Activated CD8-positive, alpha-beta T cell treated with anti-CD3 and anti-CD28 coated beads for 36 hours (primary cell): ENCODE measurements at regions of chr15 and their contacts with region 1.

Region 1: DNA sequence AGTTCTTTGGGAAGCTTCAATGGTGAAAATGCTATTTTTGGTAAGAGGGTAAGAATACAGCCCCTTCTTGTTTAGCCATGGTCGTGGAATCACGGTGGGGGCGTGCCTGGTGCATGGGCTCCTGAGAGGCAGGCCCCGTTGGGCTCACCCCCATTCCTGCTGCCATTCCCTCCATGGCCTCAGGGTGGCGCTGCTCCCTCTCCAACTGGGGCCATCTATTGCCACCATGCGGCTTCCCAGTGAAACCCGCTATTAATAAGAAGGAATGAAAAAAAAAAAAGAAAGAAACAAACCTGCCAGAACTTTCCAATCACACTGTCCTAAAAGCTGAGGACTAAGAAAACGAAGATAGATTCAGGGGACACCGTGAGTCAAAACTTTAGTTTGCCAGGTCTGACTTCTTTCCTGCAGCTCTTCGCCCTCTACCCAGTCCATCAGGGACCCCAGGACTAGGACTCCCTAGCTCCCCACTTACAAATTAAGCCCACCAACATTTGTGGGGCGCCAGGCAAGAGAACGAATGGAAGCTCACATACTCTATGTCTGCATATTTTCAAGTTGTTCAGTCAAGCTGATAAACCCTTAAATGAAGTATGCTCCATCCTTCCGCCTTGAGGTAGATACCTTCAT is 30.6 kb upstream of the ABHD2 start:
- DNase-seq: peak; percentile 85
- ATAC-seq: peak; percentile 96
- H3K4me3 Mint-ChIP-seq: no peak overlapping the region
- H3K27ac Mint-ChIP-seq: no peak overlapping the region
- H3K4me1 Mint-ChIP-seq: peaks cover 7% of the 10 kb centered on the region
- H3K27me3 Mint-ChIP-seq: peaks cover 1% of the 10 kb centered on the region
- CTCF ChIP-seq: peak; percentile 98

Region 2: GRCh38 chr15:88791637-88792036 is 266.0 kb before region 1 on chr15:
- CTCF ChIA-PET with region 1: no interaction called
- POLR2A ChIA-PET with region 1: no interaction called
- intact Hi-C with region 1: no loop called
- DNase-seq: no peak
- ATAC-seq: no peak
- H3K4me3 Mint-ChIP-seq: no peak overlapping the region
- H3K27ac Mint-ChIP-seq: no peak overlapping the region
- H3K4me1 Mint-ChIP-seq: no peaks in the 10 kb centered on the region
- H3K27me3 Mint-ChIP-seq: peaks cover 30% of the 10 kb centered on the region
- CTCF ChIP-seq: no peak

Region 3: GRCh38 chr15:89068325-89068784 is 10.7 kb after region 1 on chr15:
- CTCF ChIA-PET with region 1: interaction called, 10 read pairs
- POLR2A ChIA-PET with region 1: interaction called, 3 read pairs
- intact Hi-C with region 1: no loop called
- DNase-seq: peak; percentile 81
- ATAC-seq: peak; percentile 87
- H3K4me3 Mint-ChIP-seq: no peak overlapping the region
- H3K27ac Mint-ChIP-seq: peak overlapping the region; percentile 61
- H3K4me1 Mint-ChIP-seq: peaks cover 12% of the 10 kb centered on the region
- H3K27me3 Mint-ChIP-seq: no peaks in the 10 kb centered on the region
- CTCF ChIP-seq: no peak

Region 4: DNA sequence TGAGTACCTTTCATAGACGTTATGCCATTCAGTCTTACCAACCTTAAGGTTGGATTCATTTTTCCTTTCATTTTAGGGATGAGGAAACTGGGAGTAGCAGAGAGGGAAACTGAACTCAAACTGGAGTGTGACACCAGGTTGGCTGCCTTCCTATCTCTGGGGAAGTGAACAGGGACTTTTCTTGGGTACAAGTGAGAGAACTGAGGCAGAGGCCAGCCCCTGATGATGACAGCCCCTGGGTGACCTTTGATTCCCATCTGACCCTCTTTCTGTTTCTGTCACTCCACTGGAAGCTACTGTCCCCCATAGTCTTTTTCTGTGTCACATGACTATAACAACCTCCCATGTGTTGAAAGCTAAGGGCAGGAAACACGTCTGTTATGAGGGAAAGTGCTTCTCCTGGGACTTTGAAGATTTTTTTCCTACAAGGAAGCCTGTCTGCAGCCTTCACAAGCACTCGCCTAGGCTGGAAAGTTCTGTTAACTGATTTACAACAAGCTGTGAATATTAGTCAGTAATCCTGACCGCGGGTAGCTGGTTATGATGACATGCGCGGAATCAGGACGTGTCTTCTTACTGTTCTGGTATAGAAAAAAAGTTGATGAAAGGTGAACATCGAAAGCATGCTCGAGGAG is 62.0 kb after region 1 on chr15:
- CTCF ChIA-PET with region 1: interaction called, 34 read pairs
- POLR2A ChIA-PET with region 1: no interaction called
- intact Hi-C with region 1: no loop called
- DNase-seq: no peak
- ATAC-seq: no peak
- H3K4me3 Mint-ChIP-seq: no peak overlapping the region
- H3K27ac Mint-ChIP-seq: no peak overlapping the region
- H3K4me1 Mint-ChIP-seq: peaks cover 2% of the 10 kb centered on the region
- H3K27me3 Mint-ChIP-seq: no peaks in the 10 kb centered on the region
- CTCF ChIP-seq: no peak

Region 5: GRCh38 chr15:89150762-89151664 is 93.4 kb after region 1 on chr15:
- CTCF ChIA-PET with region 1: interaction called, 12 read pairs
- POLR2A ChIA-PET with region 1: interaction called, 4 read pairs
- intact Hi-C with region 1: no loop called
- DNase-seq: no peak
- ATAC-seq: no peak
- H3K4me3 Mint-ChIP-seq: no peak overlapping the region
- H3K27ac Mint-ChIP-seq: no peak overlapping the region
- H3K4me1 Mint-ChIP-seq: peaks cover 3% of the 10 kb centered on the region
- H3K27me3 Mint-ChIP-seq: no peaks in the 10 kb centered on the region
- CTCF ChIP-seq: no peak

Region 6: DNA sequence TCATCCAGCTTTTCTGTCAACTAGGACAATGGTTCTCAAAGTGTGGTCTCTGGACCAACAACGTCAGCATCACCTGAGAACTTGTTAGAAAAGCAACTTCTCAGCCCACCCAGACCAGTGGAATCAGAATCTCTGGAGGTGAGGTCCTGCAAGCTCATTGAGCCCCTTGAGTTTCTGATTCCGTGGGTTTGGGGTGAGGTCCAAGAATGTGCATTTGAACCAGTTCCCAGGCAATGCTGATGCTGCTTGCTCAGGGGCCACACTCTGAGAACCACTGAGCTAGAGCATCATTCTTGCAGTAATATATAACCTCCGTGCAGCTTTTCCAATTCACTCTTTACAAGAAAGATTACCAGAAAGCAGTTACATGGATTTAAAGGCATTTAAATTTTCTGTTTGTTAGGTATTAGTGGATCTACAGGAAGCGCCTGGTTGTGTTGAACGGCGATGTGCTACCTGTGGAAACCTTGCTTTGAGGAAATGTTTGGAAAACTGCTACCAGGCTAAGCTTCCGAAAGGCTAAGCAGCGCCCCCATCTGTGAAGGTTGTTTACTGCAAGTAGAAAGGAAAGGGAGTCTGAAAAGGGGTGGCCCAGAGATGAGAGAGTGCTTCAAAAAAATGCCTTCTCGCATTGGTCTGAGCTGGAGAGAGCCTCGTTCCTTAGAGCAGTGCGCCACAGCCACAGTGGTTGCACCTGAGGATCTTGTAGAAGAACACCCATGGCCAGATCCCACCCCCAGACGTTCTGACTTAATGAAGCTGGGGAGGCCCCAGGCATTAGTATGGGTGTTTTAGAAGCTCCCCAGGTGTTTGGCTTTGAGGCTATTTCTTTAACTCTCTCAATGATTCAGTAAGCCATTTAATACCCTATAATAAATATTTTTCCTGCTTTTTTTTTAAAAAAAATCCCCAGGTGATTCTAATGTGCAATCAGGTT is 113.8 kb after region 1 on chr15:
- CTCF ChIA-PET with region 1: interaction called, 262 read pairs
- POLR2A ChIA-PET with region 1: interaction called, 3 read pairs
- intact Hi-C with region 1: loop called (anchors 2 kb)
- DNase-seq: peak; percentile 49
- ATAC-seq: no peak
- H3K4me3 Mint-ChIP-seq: no peak overlapping the region
- H3K27ac Mint-ChIP-seq: no peak overlapping the region
- H3K4me1 Mint-ChIP-seq: peaks cover 29% of the 10 kb centered on the region
- H3K27me3 Mint-ChIP-seq: no peaks in the 10 kb centered on the region
- CTCF ChIP-seq: peak; percentile 80

Region 7: DNA sequence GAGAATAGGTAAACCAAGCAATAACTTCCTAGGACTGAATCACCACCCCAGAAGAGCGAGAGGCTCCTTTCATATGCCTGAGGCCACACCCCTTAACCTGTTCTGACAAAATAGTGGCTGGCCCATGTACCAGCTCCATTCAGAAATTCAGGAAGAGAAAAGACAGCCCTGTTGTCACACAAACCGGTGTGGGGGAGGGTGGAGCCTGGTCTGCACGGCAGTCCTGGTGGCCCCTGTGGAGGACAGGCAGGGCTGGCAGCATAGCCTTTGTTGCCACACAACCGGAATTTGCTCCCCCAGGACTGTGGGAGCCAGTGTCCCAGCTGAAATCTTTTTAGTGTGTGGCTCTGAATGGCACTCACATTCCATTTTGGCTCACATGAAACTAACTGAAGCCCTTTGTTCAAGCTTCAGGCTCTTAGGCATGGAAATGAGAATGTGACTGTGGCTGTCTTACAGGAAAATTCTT is 139.9 kb after region 1 on chr15:
- CTCF ChIA-PET with region 1: interaction called, 18 read pairs
- POLR2A ChIA-PET with region 1: no interaction called
- intact Hi-C with region 1: no loop called
- DNase-seq: peak; percentile 30
- ATAC-seq: peak; percentile 90
- H3K4me3 Mint-ChIP-seq: no peak overlapping the region
- H3K27ac Mint-ChIP-seq: peak overlapping the region; percentile 80
- H3K4me1 Mint-ChIP-seq: peaks cover 11% of the 10 kb centered on the region
- H3K27me3 Mint-ChIP-seq: no peaks in the 10 kb centered on the region
- CTCF ChIP-seq: no peak